ENCODE measurements at regions of chr7 and their contacts with region 1.

Region 1: GRCh38 chr7:143321734-143322133 is 5.8 kb downstream of the CLCN1 start:
- DNase-seq: peak; percentile 56 to 57
- ATAC-seq: peak; percentile 87

Region 2: GRCh38 chr7:143416565-143417149 is 94.9 kb after region 1 on chr7:
- intact Hi-C with region 1: loop called in 1 of 2 experiments (anchors 10 kb)
- DNase-seq: no peak
- ATAC-seq: peak; percentile 39

Region 3: GRCh38 chr7:143490717-143491306 is 169.1 kb after region 1 on chr7:
- intact Hi-C with region 1: no loop called
- DNase-seq: peak in 1 of 2 donors; percentile 24
- ATAC-seq: peak; percentile 80